Left colon (tissue), 2 donors: ENCODE measurements at regions of chr1 and their contacts with region 1.

Region 1: GRCh38 chr1:200738740-200739498 is at the start of gene CAMSAP2:
- DNase-seq: peak; percentile 84 to 88
- ATAC-seq: peak; percentile 83
- total RNA-seq, gene CAMSAP2: 7.4 to 9.0 TPM

Region 2: GRCh38 chr1:200453553-200453905 is 285.4 kb before region 1 on chr1:
- intact Hi-C with region 1: no loop called
- DNase-seq: no peak
- ATAC-seq: no peak

Region 3: DNA sequence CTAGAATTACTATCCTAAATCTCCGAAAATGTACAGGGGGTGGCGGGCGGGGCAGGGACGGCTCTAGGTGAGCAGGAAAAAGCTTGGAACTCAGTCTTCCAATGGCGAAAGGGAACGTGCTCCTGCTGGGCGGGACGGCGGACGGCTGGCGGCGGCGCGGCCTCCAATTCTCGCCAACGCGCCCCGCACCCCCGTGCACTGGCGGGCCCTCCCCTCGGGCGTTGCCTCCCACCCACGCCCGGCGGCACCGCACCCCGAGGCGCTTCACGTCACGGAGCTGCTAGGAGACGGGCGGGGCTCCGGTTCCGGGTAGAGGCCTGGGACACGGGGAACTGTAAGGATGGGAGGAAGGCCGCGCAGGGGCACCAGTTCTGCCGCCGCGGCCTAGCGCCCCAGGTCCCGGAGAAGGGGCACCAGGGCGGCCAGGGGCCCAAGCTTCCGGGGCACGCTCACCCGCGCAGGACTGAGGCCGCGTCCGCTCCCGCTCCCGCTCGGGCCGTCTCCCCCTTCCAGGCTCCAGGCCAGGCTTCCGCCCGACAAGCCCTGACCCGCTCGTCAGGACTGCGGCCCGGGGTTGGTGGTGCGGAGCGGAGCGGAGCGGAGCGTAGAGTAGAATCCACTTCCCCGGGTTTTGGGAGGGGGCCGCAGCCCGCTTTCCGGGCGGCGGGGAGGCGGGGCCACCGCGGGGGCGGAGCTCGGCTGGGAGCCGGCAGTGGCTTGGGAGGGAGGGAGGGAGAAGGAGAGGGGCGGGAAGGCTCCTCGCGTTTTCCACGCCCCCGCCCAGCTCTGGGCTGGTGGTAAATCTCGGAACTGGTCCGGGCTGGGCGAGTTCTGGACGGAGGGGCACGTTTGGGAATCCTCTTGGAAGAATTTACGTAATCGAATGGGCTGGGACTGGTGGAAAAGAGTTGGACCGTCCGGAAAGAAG is 69.3 kb before region 1 on chr1 and contains the start of gene DDX59:
- intact Hi-C with region 1: loop called in 1 of 2 experiments (anchors 5 kb)
- DNase-seq: peak; percentile 96
- ATAC-seq: peak; percentile 92
- total RNA-seq, gene DDX59: 14.2 to 20.5 TPM